Natural killer cell (primary cell): ENCODE measurements at regions of chr18 and their contacts with region 1.

Region 1: GRCh38 chr18:50878345-50879301 is at the start of gene ME2:
- DNase-seq: peak; percentile 93 to 96
- ATAC-seq: peak; percentile 87 to 96 (median 89)
- H3K4me3 ChIP-seq: peak within 1 kb of the TSS; percentile 96
- H3K4me3 Mint-ChIP-seq: peak within 1 kb of the TSS; percentile 98
- H3K27ac ChIP-seq: peak within 1 kb of the TSS; percentile 99
- H3K27ac Mint-ChIP-seq: peak within 1 kb of the TSS; percentile 99 to 100
- H3K4me1 ChIP-seq: peaks cover 37% of the 10 kb centered on the region
- H3K4me1 Mint-ChIP-seq: peaks cover 22 to 27% of the 10 kb centered on the region in 2 donors
- H3K27me3 ChIP-seq: no peaks in the 10 kb centered on the region
- H3K27me3 Mint-ChIP-seq: peaks cover 0 to 7% of the 10 kb centered on the region in 2 donors
- CTCF ChIP-seq: no peak
- total RNA-seq, gene ME2: 42.4 to 61.3 (median 43.5) TPM

Region 2: DNA sequence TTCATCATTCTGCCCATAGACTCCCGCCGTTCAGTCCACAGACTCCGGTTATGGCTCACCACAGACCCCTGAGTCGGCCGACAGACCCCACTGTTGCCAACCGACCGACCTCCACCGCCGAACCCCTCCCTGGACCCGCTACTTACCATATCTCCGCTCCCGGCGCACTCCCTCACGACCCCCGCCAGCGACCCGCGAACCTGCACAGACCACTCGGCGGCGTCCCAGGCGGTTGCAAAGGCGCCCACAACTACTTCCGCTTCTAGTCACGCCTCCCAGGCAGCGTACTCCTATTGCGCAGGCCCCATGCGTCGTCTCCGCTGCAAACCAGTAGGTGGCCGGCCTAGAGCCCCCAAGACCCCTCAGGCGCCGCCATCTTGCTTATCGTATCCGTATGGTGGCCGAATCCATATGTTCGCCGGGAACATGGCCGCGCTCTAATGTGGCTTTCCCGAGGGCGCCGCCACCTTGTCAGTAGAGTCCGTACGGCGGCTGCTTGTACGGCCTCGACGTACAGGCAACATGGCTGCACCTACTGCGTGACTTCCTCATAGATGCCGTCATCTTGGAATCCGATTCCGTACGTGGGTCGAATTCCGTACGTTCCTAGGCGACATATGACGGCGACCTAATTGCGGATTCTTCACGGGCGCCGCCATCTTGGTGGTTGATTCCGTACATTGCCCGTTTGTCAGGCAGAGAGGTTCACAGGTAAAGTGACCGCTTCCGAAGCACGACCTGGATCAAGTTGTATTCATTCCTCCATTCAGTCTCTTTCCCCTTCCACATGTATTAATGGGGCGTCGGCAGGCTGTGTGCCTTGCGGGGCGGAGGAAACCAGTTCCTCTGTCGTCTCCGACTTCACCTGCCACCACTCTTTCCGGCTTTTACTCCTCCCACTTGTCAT is 590.9 kb before region 1 on chr18 and contains the start of gene CXXC1:
- intact Hi-C with region 1: loop called (anchors 10 kb)
- DNase-seq: peak; percentile 94 to 99
- ATAC-seq: peak; percentile 89 to 97 (median 89)
- H3K4me3 ChIP-seq: peak within 1 kb of the TSS; percentile 87
- H3K4me3 Mint-ChIP-seq: peak within 1 kb of the TSS; percentile 96
- H3K27ac ChIP-seq: peak within 1 kb of the TSS; percentile 93
- H3K27ac Mint-ChIP-seq: peak within 1 kb of the TSS; percentile 93 to 96
- H3K4me1 ChIP-seq: peaks cover 24% of the 10 kb centered on the region
- H3K4me1 Mint-ChIP-seq: peaks cover 22 to 48% of the 10 kb centered on the region in 2 donors
- H3K27me3 ChIP-seq: no peaks in the 10 kb centered on the region
- H3K27me3 Mint-ChIP-seq: no peaks in the 10 kb centered on the region
- CTCF ChIP-seq: peak; percentile 31
- total RNA-seq, gene CXXC1: 146 to 173 (median 153) TPM

Region 3: GRCh38 chr18:51029694-51030536 is 151.3 kb after region 1 on chr18 and contains the start of gene SMAD4:
- intact Hi-C with region 1: loop called (anchors 1 kb)
- DNase-seq: peak; percentile 97
- ATAC-seq: peak; percentile 75 to 82 (median 77)
- H3K4me3 ChIP-seq: peak within 1 kb of the TSS; percentile 68
- H3K4me3 Mint-ChIP-seq: peak within 1 kb of the TSS; percentile 99
- H3K27ac ChIP-seq: peak within 1 kb of the TSS; percentile 91
- H3K27ac Mint-ChIP-seq: peak within 1 kb of the TSS; percentile 90 to 95
- H3K4me1 ChIP-seq: peaks cover 20% of the 10 kb centered on the region
- H3K4me1 Mint-ChIP-seq: peaks cover 50 to 53% of the 10 kb centered on the region in 2 donors
- H3K27me3 ChIP-seq: no peaks in the 10 kb centered on the region
- H3K27me3 Mint-ChIP-seq: no peaks in the 10 kb centered on the region
- CTCF ChIP-seq: no peak
- total RNA-seq, gene SMAD4: 63.4 to 92.7 (median 73.8) TPM

Region 4: GRCh38 chr18:51153659-51154371 is 275.2 kb after region 1 on chr18:
- intact Hi-C with region 1: loop called (anchors 5 kb)
- DNase-seq: peak; percentile 73 to 74
- ATAC-seq: peak; percentile 63 to 80 (median 75)
- H3K4me3 ChIP-seq: peak overlapping the region; percentile 33
- H3K4me3 Mint-ChIP-seq: peak overlapping the region; percentile 81
- H3K27ac ChIP-seq: peak overlapping the region; percentile 92
- H3K27ac Mint-ChIP-seq: peak overlapping the region; percentile 97 to 99
- H3K4me1 ChIP-seq: peaks cover 59% of the 10 kb centered on the region
- H3K4me1 Mint-ChIP-seq: peaks cover 51 to 55% of the 10 kb centered on the region in 2 donors
- H3K27me3 ChIP-seq: no peaks in the 10 kb centered on the region
- H3K27me3 Mint-ChIP-seq: no peaks in the 10 kb centered on the region
- CTCF ChIP-seq: no peak

Region 5: GRCh38 chr18:51211552-51211951 is 332.9 kb after region 1 on chr18:
- intact Hi-C with region 1: loop called (anchors 5 kb)
- DNase-seq: peak; percentile 64 to 65
- ATAC-seq: peak; percentile 86 to 96 (median 96)
- H3K4me3 ChIP-seq: no peak overlapping the region
- H3K4me3 Mint-ChIP-seq: peak overlapping the region; percentile 70
- H3K27ac ChIP-seq: peak overlapping the region; percentile 93
- H3K27ac Mint-ChIP-seq: peak overlapping the region; percentile 81 to 85
- H3K4me1 ChIP-seq: peaks cover 20% of the 10 kb centered on the region
- H3K4me1 Mint-ChIP-seq: peaks cover 41 to 42% of the 10 kb centered on the region in 2 donors
- H3K27me3 ChIP-seq: no peaks in the 10 kb centered on the region
- H3K27me3 Mint-ChIP-seq: no peaks in the 10 kb centered on the region
- CTCF ChIP-seq: no peak